Prostate gland (tissue), 2 donors: ENCODE measurements at regions of chr13 and their contacts with region 1.

Region 1: GRCh38 chr13:43368003-43368402 is 344.6 kb downstream of the DNAJC15 start:
- DNase-seq: peak; percentile 17
- H3K4me3 ChIP-seq: peak overlapping the region in 1 of 2 donors; percentile 13
- H3K27ac ChIP-seq: peak overlapping the region; percentile 36 to 52
- H3K4me1 ChIP-seq: peaks cover 6% of the 10 kb centered on the region
- H3K27me3 ChIP-seq: no peaks in the 10 kb centered on the region
- CTCF ChIP-seq: no peak
- POLR2A ChIP-seq: no peak

Region 2: DNA sequence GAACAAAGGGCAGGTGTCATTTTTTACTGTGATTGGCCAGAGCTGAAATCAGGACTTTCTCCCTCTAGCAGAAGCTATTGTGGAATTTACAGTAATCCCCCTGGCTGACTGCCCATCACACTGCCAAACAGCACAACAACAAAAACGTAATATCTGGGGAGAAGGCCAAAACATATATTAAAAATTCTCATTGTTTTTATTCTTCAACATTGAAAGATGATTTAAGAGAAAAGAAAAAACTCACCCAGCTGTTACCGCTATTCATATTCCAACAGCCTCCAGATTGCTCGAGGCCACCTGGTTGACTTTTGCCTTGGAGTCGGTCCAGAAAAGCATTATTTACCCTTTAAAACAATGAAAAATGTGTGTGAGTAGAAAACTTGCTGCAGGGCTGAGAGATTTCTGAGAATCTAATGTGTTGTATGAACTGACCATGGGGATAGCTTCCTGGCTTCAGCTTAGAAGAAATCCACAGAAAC is 473.2 kb before region 1 on chr13:
- intact Hi-C with region 1: no loop called
- DNase-seq: no peak
- H3K4me3 ChIP-seq: no peak overlapping the region
- H3K27ac ChIP-seq: no peak overlapping the region
- H3K4me1 ChIP-seq: no peaks in the 10 kb centered on the region
- H3K27me3 ChIP-seq: no peaks in the 10 kb centered on the region
- CTCF ChIP-seq: no peak
- POLR2A ChIP-seq: no peak

Region 3: GRCh38 chr13:43331672-43332071 is 36.3 kb before region 1 on chr13:
- intact Hi-C with region 1: loop called (anchors 5 kb)
- DNase-seq: peak; percentile 28
- H3K4me3 ChIP-seq: no peak overlapping the region
- H3K27ac ChIP-seq: no peak overlapping the region
- H3K4me1 ChIP-seq: no peaks in the 10 kb centered on the region
- H3K27me3 ChIP-seq: no peaks in the 10 kb centered on the region
- CTCF ChIP-seq: no peak
- POLR2A ChIP-seq: no peak